Activated CD4-positive, alpha-beta T cell treated with anti-CD3 and anti-CD28 coated beads, Interleukin-2, amount 10 ng/mL, durations not matched to agents 7 days and 5 days (primary cell): ENCODE measurements at regions of chr6 and their contacts with region 1.

Region 1: DNA sequence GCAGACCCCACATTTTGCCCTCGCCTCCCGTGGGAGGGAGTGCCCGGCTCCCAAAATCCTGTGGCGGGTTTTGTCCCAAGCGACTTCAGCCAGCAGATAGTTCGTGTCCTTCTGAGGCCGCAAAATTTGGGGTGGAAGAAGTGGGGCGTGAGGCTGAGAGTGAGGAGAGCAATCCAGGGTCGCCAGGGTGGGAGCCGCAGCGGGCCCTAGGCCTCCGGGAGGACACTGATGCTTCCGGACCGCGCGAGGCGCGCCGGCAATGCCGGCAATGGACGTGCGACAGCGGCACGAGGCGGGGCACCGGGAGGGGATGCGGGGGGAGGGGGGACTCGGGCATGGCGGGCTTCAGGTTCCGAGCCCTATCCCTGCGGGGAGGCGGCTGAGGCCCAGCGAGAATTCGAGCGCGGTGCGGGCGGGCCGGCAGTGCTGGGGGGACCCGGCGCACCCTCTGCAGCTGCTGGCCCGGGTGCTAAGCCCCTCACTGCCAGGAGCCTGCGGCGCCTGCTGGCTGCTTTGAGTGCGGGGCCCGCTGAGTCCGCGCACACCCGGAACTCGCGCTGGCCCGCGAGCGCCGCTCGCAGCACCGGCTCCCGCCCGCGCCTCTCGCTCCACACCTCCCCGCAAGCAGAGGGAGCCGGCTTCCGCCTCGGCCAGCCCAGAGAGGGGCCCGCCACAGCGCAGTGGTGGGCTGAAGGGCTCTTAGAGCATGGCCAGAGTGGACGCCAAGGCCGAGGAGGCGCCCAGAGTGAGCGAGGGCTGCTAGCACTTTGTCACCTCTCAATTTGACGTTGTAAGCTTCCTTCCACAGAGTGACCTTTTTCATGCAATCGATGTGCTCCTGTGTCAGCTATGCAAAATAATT is 143.8 kb downstream of the LPA start:
- DNase-seq: peak; percentile 71
- H3K4me3 Mint-ChIP-seq: peak overlapping the region; percentile 81
- H3K27ac Mint-ChIP-seq: peak overlapping the region; percentile 88
- H3K4me1 Mint-ChIP-seq: peaks cover 19% of the 10 kb centered on the region
- H3K27me3 Mint-ChIP-seq: peaks cover 42% of the 10 kb centered on the region

Region 2: GRCh38 chr6:160510199-160510598 is 10.1 kb before region 1 on chr6:
- CTCF ChIA-PET with region 1: interaction called, 21 read pairs
- POLR2A ChIA-PET with region 1: no interaction called
- DNase-seq: no peak
- H3K4me3 Mint-ChIP-seq: no peak overlapping the region
- H3K27ac Mint-ChIP-seq: no peak overlapping the region
- H3K4me1 Mint-ChIP-seq: no peaks in the 10 kb centered on the region
- H3K27me3 Mint-ChIP-seq: peaks cover 18% of the 10 kb centered on the region

Region 3: GRCh38 chr6:160534050-160534696 is 13.9 kb after region 1 on chr6:
- CTCF ChIA-PET with region 1: interaction called, 28 read pairs
- POLR2A ChIA-PET with region 1: no interaction called
- DNase-seq: peak; percentile 52
- H3K4me3 Mint-ChIP-seq: no peak overlapping the region
- H3K27ac Mint-ChIP-seq: no peak overlapping the region
- H3K4me1 Mint-ChIP-seq: no peaks in the 10 kb centered on the region
- H3K27me3 Mint-ChIP-seq: peaks cover 20% of the 10 kb centered on the region